ENCODE measurements at regions of chr3 and their contacts with region 1.

Region 1: GRCh38 chr3:59313365-59313764 is 263.5 kb upstream of the CFAP20DC start:
- DNase-seq: peak in 7 of 9 donors; percentile 3 to 47 (median 15)
- ATAC-seq: peak; percentile 59
- H3K4me3 ChIP-seq: no peak overlapping the region
- H3K4me3 Mint-ChIP-seq: no peak overlapping the region
- H3K27ac ChIP-seq: no peak overlapping the region
- H3K27ac Mint-ChIP-seq: peak overlapping the region in 1 of 9 donors; percentile 80
- H3K4me1 ChIP-seq: no peaks in the 10 kb centered on the region
- H3K4me1 Mint-ChIP-seq: peaks cover 0 to 9% (median 3%) of the 10 kb centered on the region in 7 donors
- H3K27me3 ChIP-seq: no peaks in the 10 kb centered on the region
- H3K27me3 Mint-ChIP-seq: peaks cover 0 to 7% (median 0%) of the 10 kb centered on the region in 5 donors

Region 2: DNA sequence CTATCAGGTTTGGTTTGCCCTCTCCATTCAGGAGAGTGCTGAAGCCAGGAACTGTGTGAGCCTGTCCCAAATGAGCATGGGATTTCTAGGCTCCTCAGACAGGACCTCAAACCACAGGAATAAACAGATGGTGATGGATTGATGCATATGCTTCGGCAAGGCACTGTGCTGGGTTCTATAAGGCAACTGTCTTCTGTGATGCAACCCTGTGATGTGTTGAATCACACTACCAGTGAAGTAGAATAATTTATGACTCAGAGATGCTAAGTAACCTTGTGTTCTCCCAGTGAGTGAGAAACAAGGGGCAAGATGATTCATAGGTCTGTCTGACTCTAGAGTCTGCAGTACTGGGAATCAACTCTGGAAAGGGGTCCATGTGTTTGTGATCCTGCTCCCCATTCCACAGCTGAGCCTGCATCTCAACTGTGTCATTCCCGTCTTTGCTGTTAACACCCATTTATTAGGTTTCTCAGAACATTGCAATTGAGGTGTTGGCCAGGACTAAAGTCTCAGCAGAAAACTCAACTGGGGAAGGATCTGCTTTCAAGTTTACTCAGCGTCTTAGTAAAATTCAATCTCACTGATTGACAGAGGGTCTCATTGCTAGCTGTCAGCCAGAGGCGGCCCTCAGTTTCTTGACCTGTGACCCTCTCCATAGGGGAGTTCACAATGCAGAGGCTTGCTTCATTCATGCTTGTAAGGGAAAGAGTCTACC is 246.5 kb after region 1 on chr3:
- CTCF ChIA-PET with region 1: no interaction called
- POLR2A ChIA-PET with region 1: no interaction called
- intact Hi-C with region 1: loop called (anchors 5 kb)
- DNase-seq: peak in 1 of 9 donors; percentile 29
- ATAC-seq: peak; percentile 38
- H3K4me3 ChIP-seq: no peak overlapping the region
- H3K4me3 Mint-ChIP-seq: no peak overlapping the region
- H3K27ac ChIP-seq: no peak overlapping the region
- H3K27ac Mint-ChIP-seq: no peak overlapping the region
- H3K4me1 ChIP-seq: no peaks in the 10 kb centered on the region
- H3K4me1 Mint-ChIP-seq: peaks cover 8 to 31% (median 22%) of the 10 kb centered on the region in 7 donors
- H3K27me3 ChIP-seq: no peaks in the 10 kb centered on the region
- H3K27me3 Mint-ChIP-seq: no peaks in the 10 kb centered on the region